WTC11 (cell line): ENCODE measurements at regions of chr7 and their contacts with region 1.

Region 1: DNA sequence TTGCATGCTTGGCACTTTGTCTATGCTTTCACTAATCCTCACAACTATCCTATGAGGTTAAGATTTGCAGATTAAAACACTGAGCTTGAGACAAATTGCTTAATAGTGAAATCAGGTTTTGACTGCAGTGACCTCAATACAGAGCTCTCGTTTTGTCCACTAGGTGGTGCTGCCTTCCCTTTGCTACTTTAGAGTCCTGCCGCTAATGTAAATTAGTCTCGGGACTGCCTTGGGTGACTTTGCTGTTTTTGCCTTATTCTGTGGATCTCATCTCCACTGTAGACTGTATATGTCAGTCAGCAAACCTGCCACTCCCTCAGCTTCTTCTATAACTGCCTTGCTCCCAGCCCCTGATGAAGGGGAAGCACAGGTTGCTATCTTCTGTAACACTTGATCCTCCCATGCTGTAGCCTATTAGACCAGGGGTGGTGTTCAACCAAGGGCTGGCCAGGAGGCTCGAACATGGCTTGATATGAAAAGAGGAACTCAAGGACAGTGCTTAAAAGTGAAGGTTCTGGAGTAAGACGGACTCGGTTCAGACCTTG is 26.0 kb downstream of the ASB4 start:
- DNase-seq: peak; percentile 67
- ATAC-seq: peak; percentile 94
- H3K4me3 Mint-ChIP-seq: no peak overlapping the region
- H3K27ac Mint-ChIP-seq: no peak overlapping the region
- H3K4me1 Mint-ChIP-seq: peaks cover 3% of the 10 kb centered on the region; the same call in 1 of the 2 replicates
- H3K27me3 Mint-ChIP-seq: peaks cover 4% of the 10 kb centered on the region; the same call in 1 of the 2 replicates
- CTCF ChIP-seq: peak; percentile 78

Region 2: GRCh38 chr7:95476904-95477594 is 34.7 kb before region 1 on chr7:
- CTCF ChIA-PET with region 1: interaction called, 15 read pairs
- POLR2A ChIA-PET with region 1: no interaction called
- DNase-seq: peak; percentile 58
- ATAC-seq: peak; percentile 36
- H3K4me3 Mint-ChIP-seq: no peak overlapping the region; the same call in 1 of the 2 replicates
- H3K27ac Mint-ChIP-seq: no peak overlapping the region
- H3K4me1 Mint-ChIP-seq: peaks cover 20% of the 10 kb centered on the region
- H3K27me3 Mint-ChIP-seq: no peaks in the 10 kb centered on the region
- CTCF ChIP-seq: no peak

Region 3: DNA sequence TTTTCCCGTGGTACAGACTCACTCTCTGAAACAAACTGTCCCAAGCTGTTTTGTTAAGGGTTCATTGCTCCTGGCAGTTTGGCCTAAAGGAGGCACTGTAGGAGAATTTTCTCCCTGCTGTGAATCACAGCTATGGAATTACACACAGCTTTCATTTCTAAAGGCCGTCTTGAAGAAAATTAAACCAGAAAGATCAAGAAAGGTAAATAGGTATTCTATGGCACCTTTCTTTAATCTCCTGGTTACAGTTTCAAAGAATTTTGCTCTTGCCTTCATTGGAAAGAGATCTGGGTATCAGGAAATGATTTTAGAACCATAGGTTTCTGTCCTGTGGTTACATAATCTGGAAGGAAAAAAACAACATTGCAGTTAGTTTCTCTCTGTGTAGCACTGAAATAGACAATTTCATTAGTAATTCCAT is 33.3 kb after region 1 on chr7:
- CTCF ChIA-PET with region 1: interaction called, 11 read pairs
- POLR2A ChIA-PET with region 1: no interaction called
- DNase-seq: no peak
- ATAC-seq: peak; percentile 92
- H3K4me3 Mint-ChIP-seq: no peak overlapping the region
- H3K27ac Mint-ChIP-seq: no peak overlapping the region
- H3K4me1 Mint-ChIP-seq: peaks cover 3% of the 10 kb centered on the region
- H3K27me3 Mint-ChIP-seq: no peaks in the 10 kb centered on the region
- CTCF ChIP-seq: no peak

Region 4: GRCh38 chr7:95684037-95684436 is 172.2 kb after region 1 on chr7:
- CTCF ChIA-PET with region 1: interaction called, 232 read pairs
- POLR2A ChIA-PET with region 1: interaction called, 3 read pairs
- DNase-seq: no peak
- ATAC-seq: peak; percentile 61
- H3K4me3 Mint-ChIP-seq: no peak overlapping the region
- H3K27ac Mint-ChIP-seq: no peak overlapping the region
- H3K4me1 Mint-ChIP-seq: 0 out of 2 replicates have a peak, but pooled peaks cover 3% of the 10 kb centered on the region
- H3K27me3 Mint-ChIP-seq: no peaks in the 10 kb centered on the region
- CTCF ChIP-seq: no peak